A549 (cell line): ENCODE measurements at regions of chr18 and their contacts with region 1.

Region 1: DNA sequence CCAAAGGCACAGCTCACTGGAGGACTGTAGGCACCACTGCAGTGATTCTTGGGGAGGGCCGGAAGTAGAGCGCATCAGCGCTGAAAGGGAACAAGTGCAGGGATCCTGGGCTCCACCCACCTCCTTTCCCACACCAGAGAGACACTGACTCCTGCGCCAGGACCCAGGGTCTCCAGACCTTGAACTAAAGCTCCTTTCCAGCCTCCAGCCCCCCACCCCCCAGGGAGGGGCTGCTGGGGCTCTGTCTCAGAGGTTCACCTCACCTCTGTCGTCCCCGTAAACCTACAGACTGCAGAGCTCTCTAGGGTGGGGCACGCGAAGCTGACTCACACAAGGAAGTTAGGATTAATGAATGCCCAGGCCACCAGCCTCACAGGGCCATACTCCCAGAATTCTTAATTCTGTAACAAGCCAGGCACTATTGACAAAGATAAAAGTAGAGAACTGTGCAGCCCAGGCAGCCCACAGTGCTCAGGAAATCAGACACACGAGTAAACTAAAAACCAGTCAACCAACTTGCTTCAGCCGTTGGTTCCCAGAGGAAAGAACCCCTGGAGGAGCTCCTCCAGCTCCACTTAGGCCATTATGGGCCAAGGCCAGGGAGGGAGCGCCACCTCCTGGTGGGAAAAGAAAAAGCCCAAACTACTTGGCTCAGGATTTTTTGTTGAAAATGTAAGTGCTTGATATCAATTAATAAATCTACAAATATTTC is 45.1 kb upstream of the ACAA2 start:
- DNase-seq: peak; percentile 56 to 75
- ATAC-seq: peak; percentile 90 to 93
- H3K4me3 ChIP-seq: no peak overlapping the region
- H3K27ac ChIP-seq: peak overlapping the region; percentile 83 to 91
- H3K4me1 ChIP-seq: peaks cover 17% of the 10 kb centered on the region
- CTCF ChIP-seq: peak; percentile 88
- EP300 ChIP-seq: no peak
- POLR2A ChIP-seq: no peak
- RAD21 ChIP-seq: peak; percentile 94 to 96

Region 2: DNA sequence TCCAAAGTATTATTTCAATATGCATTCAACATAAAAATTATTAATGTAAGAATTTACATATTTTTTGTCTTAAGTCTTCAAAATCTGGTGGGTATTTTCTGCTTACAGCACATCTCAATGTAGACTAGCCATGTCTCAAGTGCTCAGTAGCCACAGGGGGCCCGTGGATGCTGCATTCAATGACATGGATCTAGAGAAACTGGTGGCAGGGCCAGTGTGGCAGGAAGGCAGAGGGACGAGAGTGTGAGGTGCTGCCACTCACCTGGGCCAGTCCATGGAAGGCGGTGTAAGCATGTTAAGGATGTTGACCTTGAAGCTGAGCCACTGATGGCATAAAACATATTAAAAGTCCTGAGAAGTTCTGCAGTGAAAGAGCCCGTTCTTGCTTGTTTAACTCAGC is 302.8 kb before region 1 on chr18:
- CTCF ChIA-PET with region 1: interaction called, 47 read pairs
- POLR2A ChIA-PET with region 1: no interaction called
- DNase-seq: no peak
- ATAC-seq: no peak
- H3K4me3 ChIP-seq: no peak overlapping the region
- H3K27ac ChIP-seq: no peak overlapping the region
- H3K4me1 ChIP-seq: no peaks in the 10 kb centered on the region
- CTCF ChIP-seq: no peak
- EP300 ChIP-seq: no peak
- POLR2A ChIP-seq: no peak
- RAD21 ChIP-seq: no peak

Region 3: GRCh38 chr18:49768051-49768391 is 90.4 kb before region 1 on chr18:
- CTCF ChIA-PET with region 1: interaction called, 38 read pairs
- POLR2A ChIA-PET with region 1: no interaction called
- DNase-seq: peak; percentile 7 to 61
- ATAC-seq: peak; percentile 68 to 74; a peak in 4 of 6 replicates
- H3K4me3 ChIP-seq: no peak overlapping the region
- H3K27ac ChIP-seq: no peak overlapping the region
- H3K4me1 ChIP-seq: no peaks in the 10 kb centered on the region
- CTCF ChIP-seq: peak; percentile 49
- EP300 ChIP-seq: no peak
- POLR2A ChIP-seq: no peak
- RAD21 ChIP-seq: peak; percentile 61 to 72

Region 4: DNA sequence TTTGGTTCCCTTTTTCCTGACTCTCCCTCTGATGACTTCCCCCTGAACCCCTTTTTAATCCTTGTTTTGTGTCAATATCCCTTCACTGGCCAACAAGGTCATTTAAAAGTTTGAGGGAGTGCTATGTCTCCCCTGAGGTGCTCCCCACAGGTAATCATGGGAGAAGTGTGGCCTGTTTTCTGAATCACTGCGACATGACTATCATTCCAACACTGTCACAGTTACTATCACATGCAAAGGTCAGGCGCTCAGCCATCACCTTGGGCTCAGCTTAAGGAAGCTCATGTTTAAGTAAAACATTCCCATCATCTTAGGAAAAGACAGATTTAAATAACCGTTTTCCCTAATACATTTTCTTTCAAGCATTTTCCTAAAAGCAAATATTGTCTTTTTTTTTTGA is 24.2 kb before region 1 on chr18:
- CTCF ChIA-PET with region 1: interaction called, 16 read pairs
- POLR2A ChIA-PET with region 1: no interaction called
- DNase-seq: no peak
- ATAC-seq: no peak
- H3K4me3 ChIP-seq: no peak overlapping the region
- H3K27ac ChIP-seq: peak overlapping the region; percentile 43 to 81
- H3K4me1 ChIP-seq: peaks cover 44% of the 10 kb centered on the region
- CTCF ChIP-seq: no peak
- EP300 ChIP-seq: no peak
- POLR2A ChIP-seq: no peak
- RAD21 ChIP-seq: no peak

Region 5: DNA sequence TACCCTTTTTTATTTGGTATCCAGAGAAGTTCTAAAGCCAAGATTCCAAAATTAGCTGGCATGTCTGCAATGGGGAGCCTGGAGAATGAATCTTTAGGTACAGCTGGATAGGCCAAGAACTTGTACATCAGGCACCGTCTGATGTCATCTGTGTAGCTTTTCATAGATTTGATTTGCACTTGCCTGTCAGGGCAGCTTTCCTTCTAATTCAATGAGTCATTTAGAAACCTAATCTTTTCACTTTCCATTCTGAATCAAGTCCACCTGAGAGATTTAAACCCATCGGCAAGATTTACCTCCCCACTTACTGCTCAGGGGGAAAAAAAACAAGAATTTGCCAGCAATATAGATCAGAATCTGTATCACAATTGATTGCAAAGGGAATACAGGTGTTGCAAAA is 15.8 kb after region 1 on chr18:
- CTCF ChIA-PET with region 1: interaction called, 33 read pairs
- POLR2A ChIA-PET with region 1: no interaction called
- DNase-seq: no peak
- ATAC-seq: no peak
- H3K4me3 ChIP-seq: no peak overlapping the region
- H3K27ac ChIP-seq: no peak overlapping the region
- H3K4me1 ChIP-seq: no peaks in the 10 kb centered on the region
- CTCF ChIP-seq: no peak
- EP300 ChIP-seq: no peak
- POLR2A ChIP-seq: no peak
- RAD21 ChIP-seq: no peak

Region 6: DNA sequence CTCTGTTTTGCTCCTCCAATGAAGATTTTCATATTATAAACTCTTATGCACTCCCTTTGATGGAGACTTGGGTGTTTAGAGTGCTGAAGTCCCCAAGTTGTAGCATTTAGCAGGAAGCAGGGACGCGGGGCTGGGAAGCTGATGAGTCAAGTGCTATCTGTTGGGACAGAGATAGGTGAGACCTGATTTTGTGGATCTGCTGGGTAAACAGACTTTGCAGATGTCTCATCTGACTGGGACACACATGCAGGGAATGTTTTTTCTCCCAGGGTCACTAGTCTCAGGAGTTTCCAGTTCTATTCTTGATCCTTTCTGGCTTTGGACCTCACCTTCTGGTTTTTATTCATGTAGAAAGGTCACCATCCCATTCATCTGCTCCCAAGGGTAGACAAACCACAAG is 34.6 kb after region 1 on chr18:
- CTCF ChIA-PET with region 1: no interaction called
- POLR2A ChIA-PET with region 1: no interaction called
- DNase-seq: no peak
- ATAC-seq: no peak
- H3K4me3 ChIP-seq: no peak overlapping the region
- H3K27ac ChIP-seq: no peak overlapping the region
- H3K4me1 ChIP-seq: 0 out of 3 replicates have a peak, but pooled peaks cover 3% of the 10 kb centered on the region
- CTCF ChIP-seq: no peak
- EP300 ChIP-seq: no peak
- POLR2A ChIP-seq: no peak
- RAD21 ChIP-seq: no peak